ENCODE measurements at regions of chr7 and their contacts with region 1.

Region 1: GRCh38 chr7:23105644-23106056 is at the start of gene KLHL7:
- DNase-seq: peak; percentile 99
- ATAC-seq: peak; percentile 98
- total RNA-seq, gene KLHL7: 162 TPM

Region 2: DNA sequence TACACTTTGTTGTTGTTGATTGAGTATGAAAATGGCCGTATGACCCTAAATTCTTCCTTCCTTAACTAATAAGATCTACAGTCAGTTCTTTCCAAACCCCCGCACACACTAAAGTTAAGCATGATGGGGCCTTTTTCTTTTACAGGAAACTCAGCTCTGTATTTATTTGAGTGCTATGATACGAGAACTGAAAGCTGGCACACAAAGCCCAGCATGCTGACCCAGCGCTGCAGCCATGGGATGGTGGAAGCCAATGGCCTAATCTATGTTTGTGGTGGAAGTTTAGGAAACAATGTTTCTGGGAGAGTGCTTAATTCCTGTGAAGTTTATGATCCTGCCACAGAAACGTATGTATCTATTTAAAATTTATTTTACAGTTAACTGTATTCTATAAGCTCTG is 62.0 kb after region 1 on chr7:
- intact Hi-C with region 1: loop called (anchors 5 kb)
- DNase-seq: no peak
- ATAC-seq: no peak

Region 3: GRCh38 chr7:23247603-23248335 is 142.1 kb after region 1 on chr7:
- intact Hi-C with region 1: loop called (anchors 5 kb)
- DNase-seq: peak; percentile 84
- ATAC-seq: peak; percentile 77

Region 4: GRCh38 chr7:23261843-23262452 is 156.3 kb after region 1 on chr7:
- intact Hi-C with region 1: loop called (anchors 5 kb)
- DNase-seq: peak; percentile 83
- ATAC-seq: peak; percentile 83